ENCODE measurements at regions of chr1 and their contacts with region 1.

Region 1: GRCh38 chr1:154075746-154076145 is 79.1 kb downstream of the NUP210L start:
- DNase-seq: no peak
- ATAC-seq: no peak
- H3K4me3 Mint-ChIP-seq: no peak overlapping the region
- H3K27ac Mint-ChIP-seq: no peak overlapping the region
- H3K4me1 Mint-ChIP-seq: no peaks in the 10 kb centered on the region
- H3K27me3 Mint-ChIP-seq: no peaks in the 10 kb centered on the region; the same call in 1 of the 2 replicates
- CTCF ChIP-seq: no peak

Region 2: GRCh38 chr1:153842006-153842471 is 233.7 kb before region 1 on chr1:
- CTCF ChIA-PET with region 1: no interaction called
- POLR2A ChIA-PET with region 1: interaction called, 10 read pairs
- DNase-seq: no peak
- ATAC-seq: no peak
- H3K4me3 Mint-ChIP-seq: no peak overlapping the region
- H3K27ac Mint-ChIP-seq: no peak overlapping the region
- H3K4me1 Mint-ChIP-seq: no peaks in the 10 kb centered on the region
- H3K27me3 Mint-ChIP-seq: no peaks in the 10 kb centered on the region
- CTCF ChIP-seq: no peak

Region 3: DNA sequence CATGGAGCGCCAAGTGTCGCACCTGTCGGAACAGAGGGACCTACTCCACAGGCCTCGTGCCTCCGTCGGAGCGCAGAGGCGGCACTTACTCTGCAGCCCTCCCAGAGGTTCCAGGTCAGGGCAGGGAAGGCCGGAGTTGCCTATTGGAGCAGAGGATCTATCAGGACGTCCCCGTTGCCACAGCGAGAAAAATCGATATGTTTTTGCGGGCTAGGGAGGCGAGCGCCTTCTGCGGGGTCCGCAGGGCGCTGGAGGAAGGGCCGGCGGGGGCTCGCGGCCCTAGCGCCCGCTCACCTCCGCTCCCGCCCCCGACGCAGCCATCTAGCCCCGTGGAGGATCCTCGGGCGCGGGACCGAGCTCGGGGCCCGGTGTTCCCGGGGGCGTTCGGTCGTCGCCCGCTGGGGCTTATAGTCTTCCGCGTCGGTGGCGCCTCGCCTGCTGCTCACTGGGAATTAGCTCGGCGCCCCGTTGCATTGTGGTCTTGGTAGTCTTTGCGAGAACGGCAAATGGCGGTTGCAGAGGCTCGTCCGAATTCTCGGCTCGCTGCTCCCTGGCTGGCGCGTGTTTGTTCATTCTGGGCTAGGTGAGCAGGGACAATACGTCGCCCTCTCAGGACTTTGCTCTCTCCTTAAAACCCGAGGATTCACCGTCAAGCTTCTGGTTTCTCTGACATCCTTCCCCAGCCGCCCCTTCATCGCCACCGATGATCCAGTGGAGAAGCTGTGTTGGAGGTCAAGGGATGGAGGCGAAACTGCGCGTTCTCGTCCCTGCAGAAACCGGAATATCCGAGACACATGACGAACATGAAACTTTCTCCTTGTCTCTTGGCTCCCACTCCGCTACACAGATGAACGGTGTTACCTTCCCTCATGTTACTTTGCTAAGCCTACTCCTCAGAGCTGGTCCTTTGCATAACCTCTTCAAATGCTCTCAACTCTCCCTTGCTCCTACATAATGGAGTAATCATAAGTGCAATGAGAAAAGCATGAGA is 98.2 kb before region 1 on chr1 and contains the start of gene JTB:
- CTCF ChIA-PET with region 1: no interaction called
- POLR2A ChIA-PET with region 1: interaction called, 15 read pairs
- DNase-seq: peak; percentile 88
- ATAC-seq: peak; percentile 87
- H3K4me3 Mint-ChIP-seq: peak within 1 kb of the TSS; percentile 98
- H3K27ac Mint-ChIP-seq: peak within 1 kb of the TSS; percentile 97
- H3K4me1 Mint-ChIP-seq: peaks cover 31% of the 10 kb centered on the region
- H3K27me3 Mint-ChIP-seq: no peaks in the 10 kb centered on the region
- CTCF ChIP-seq: no peak
- total RNA-seq, gene JTB: 88.8 to 90.6 TPM (median 90.3 TPM) in 3 replicates

Measured in WTC11 (cell line).